ENCODE measurements at regions of chr11 and their contacts with region 1.

Region 1: GRCh38 chr11:46489661-46490560 is 98.3 kb upstream of the CHRM4 start:
- DNase-seq: no peak
- ATAC-seq: peak in 1 of 4 donors; percentile 54
- H3K4me3 ChIP-seq: no peak overlapping the region
- H3K27ac ChIP-seq: no peak overlapping the region
- H3K4me1 ChIP-seq: peaks cover 0 to 43% (median 29%) of the 10 kb centered on the region in 12 donors
- H3K27me3 ChIP-seq: no peaks in the 10 kb centered on the region
- CTCF ChIP-seq: peak; percentile 26 to 66 (median 48)
- POLR2A ChIP-seq: no peak

Region 2: GRCh38 chr11:46445920-46446771 is 43.8 kb before region 1 on chr11:
- intact Hi-C with region 1: no loop called
- DNase-seq: no peak
- ATAC-seq: peak in 1 of 4 donors; percentile 20
- H3K4me3 ChIP-seq: no peak overlapping the region
- H3K27ac ChIP-seq: peak overlapping the region in 2 of 12 donors; percentile 10 to 21
- H3K4me1 ChIP-seq: peaks cover 0 to 47% (median 29%) of the 10 kb centered on the region in 12 donors
- H3K27me3 ChIP-seq: no peaks in the 10 kb centered on the region
- CTCF ChIP-seq: peak in 7 of 12 donors; percentile 13 to 42 (median 22)
- POLR2A ChIP-seq: no peak

Region 3: DNA sequence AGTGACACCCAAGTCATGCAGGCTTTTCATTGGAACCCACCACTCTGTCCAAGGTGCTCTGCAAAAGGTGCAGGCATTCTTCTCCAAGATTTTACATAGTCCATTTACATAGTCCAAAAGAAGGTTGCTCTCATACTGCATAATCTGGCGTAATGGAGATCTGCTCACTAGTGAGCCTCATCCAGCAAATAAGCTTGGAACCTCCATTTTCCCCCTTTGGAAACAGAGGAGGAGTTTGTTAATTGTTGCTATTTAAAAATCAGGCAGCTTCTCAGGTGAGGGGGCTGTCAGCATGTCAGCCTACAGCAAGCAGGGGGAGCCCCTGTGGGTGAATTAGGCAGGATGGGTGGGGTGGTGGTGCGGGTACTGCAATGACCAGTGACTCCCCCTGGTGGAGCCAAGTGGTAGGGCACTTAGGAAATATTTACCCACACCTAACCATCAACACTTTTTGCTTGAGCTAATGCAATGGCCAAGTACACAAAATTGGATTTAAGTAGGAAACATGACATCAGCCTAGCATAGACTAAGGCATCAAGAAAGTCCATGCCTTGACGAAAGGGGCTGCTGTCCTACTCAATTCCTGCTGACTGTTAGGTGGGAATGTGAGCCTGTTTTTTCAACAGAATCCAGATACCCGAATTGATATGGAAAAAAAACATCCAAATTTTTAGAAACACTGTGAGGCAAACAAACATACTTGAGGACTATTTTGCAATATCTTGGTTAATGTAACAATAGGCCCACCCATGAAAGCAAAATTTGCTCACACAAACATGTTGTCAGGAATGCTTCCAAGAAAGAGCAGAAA is 39.4 kb after region 1 on chr11:
- intact Hi-C with region 1: loop called in 8 of 10 experiments (anchors 2 to 10 kb)
- DNase-seq: peak; percentile 61 to 70 (median 68)
- ATAC-seq: peak in 3 of 4 donors; percentile 80 to 87 (median 81)
- H3K4me3 ChIP-seq: no peak overlapping the region
- H3K27ac ChIP-seq: peak overlapping the region in 1 of 12 donors; percentile 4
- H3K4me1 ChIP-seq: peaks cover 0 to 37% (median 21%) of the 10 kb centered on the region in 12 donors
- H3K27me3 ChIP-seq: no peaks in the 10 kb centered on the region
- CTCF ChIP-seq: peak; percentile 86 to 96 (median 92)
- POLR2A ChIP-seq: no peak

Region 4: DNA sequence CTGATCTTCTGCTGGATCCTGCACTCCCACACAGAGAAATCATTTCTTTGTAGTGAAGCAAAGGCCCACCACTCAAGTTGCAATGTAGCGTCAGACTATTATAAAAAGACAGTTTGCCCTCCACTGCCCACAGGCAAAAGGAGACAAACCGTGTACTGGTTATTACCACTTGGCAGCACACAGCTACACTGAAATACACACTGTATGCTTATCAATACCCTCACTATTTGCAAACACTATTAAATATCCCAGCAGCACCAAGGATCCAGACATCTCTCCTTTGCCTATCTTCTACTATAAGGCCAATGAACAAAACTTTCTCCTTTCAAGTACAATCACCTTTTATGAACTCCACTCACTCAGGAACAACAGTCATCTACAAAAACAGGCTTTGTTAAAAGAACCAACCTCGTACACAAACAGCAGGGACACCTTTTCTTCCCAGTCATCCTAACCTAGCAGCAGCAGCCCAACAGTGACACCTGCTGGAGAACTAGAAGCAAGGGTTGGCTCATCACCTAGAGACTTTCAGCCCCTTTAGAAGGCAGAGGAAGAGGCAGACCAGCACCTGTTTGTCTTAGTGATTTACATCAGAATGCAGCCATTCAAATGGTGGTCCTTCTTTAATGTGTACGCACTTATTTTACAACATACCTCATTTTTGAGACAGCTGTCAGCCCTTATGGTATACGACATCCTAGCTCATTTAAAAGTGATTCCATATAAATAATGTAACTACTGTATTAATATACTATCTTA is 47.8 kb after region 1 on chr11:
- intact Hi-C with region 1: loop called in 2 of 10 experiments (anchors 5 to 10 kb)
- DNase-seq: peak in 4 of 5 donors; percentile 53 to 63 (median 60)
- ATAC-seq: peak; percentile 46 to 78 (median 74)
- H3K4me3 ChIP-seq: no peak overlapping the region
- H3K27ac ChIP-seq: no peak overlapping the region
- H3K4me1 ChIP-seq: peaks cover 0 to 26% (median 8%) of the 10 kb centered on the region in 12 donors
- H3K27me3 ChIP-seq: no peaks in the 10 kb centered on the region
- CTCF ChIP-seq: peak; percentile 80 to 94 (median 90)
- POLR2A ChIP-seq: no peak

Region 5: DNA sequence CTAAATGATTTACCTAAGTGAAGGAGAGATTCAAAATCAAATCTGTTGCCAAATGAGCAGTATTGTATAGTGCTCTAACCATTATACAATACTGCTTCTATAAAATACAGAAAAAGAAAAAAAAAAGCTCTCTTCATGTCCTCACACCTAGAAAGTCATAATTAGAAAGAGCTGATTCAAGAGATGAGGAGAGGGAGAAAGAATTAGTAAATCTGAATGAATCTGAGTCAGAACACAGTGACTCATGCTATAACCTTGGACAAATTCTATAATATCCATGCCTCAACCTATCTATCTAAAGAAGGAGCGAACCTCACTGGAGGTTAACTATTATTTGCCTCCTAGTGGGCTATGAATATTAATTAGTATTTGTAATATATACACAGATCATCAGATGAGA is 74.5 kb after region 1 on chr11:
- intact Hi-C with region 1: no loop called
- DNase-seq: no peak
- ATAC-seq: no peak
- H3K4me3 ChIP-seq: no peak overlapping the region
- H3K27ac ChIP-seq: no peak overlapping the region
- H3K4me1 ChIP-seq: peaks cover 0 to 29% (median 16%) of the 10 kb centered on the region in 12 donors
- H3K27me3 ChIP-seq: no peaks in the 10 kb centered on the region
- CTCF ChIP-seq: no peak
- POLR2A ChIP-seq: no peak